Naive thymus-derived CD4-positive, alpha-beta T cell (primary cell): ENCODE measurements at regions of chr5 and their contacts with region 1.

Region 1: GRCh38 chr5:54243473-54244080 is 66.8 kb downstream of the ARL15 start:
- DNase-seq: peak in 6 of 9 donors; percentile 10 to 45 (median 36)
- ATAC-seq: peak; percentile 54
- H3K4me3 ChIP-seq: no peak overlapping the region
- H3K4me3 Mint-ChIP-seq: no peak overlapping the region
- H3K27ac ChIP-seq: no peak overlapping the region
- H3K27ac Mint-ChIP-seq: no peak overlapping the region
- H3K4me1 ChIP-seq: no peaks in the 10 kb centered on the region
- H3K4me1 Mint-ChIP-seq: peaks cover 0 to 22% (median 14%) of the 10 kb centered on the region in 7 donors
- H3K27me3 ChIP-seq: no peaks in the 10 kb centered on the region
- H3K27me3 Mint-ChIP-seq: peaks cover 0 to 10% (median 0%) of the 10 kb centered on the region in 5 donors

Region 2: GRCh38 chr5:54415896-54416601 is 172.5 kb after region 1 on chr5:
- CTCF ChIA-PET with region 1: interaction called, 23 read pairs
- POLR2A ChIA-PET with region 1: no interaction called
- intact Hi-C with region 1: loop called (anchors 1 kb)
- DNase-seq: no peak
- ATAC-seq: no peak
- H3K4me3 ChIP-seq: no peak overlapping the region
- H3K4me3 Mint-ChIP-seq: no peak overlapping the region
- H3K27ac ChIP-seq: no peak overlapping the region
- H3K27ac Mint-ChIP-seq: no peak overlapping the region
- H3K4me1 ChIP-seq: no peaks in the 10 kb centered on the region
- H3K4me1 Mint-ChIP-seq: peaks cover 0 to 1% (median 0%) of the 10 kb centered on the region in 7 donors
- H3K27me3 ChIP-seq: no peaks in the 10 kb centered on the region
- H3K27me3 Mint-ChIP-seq: peaks cover 4 to 32% (median 10%) of the 10 kb centered on the region in 5 donors

Region 3: DNA sequence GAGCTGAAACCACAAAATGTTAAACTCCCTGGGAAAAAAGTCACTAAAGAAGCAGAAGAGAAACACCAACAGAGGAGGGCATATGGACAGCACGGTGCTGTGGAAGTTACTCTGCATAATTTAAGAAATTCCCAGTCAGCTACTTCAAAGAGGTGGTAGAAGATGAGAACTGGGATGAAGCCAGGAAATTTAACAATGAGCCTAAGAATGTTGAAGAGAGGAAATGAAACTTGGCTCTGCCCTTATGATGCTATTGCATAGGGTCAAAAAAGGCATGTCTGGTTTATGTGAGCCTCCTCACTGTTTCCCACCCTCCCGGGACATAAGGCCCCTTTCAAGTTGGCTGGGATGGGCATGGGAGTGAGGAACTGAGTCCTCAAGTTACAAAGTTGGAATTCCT is 248.6 kb after region 1 on chr5:
- CTCF ChIA-PET with region 1: interaction called, 19 read pairs
- POLR2A ChIA-PET with region 1: no interaction called
- intact Hi-C with region 1: loop called (anchors 1 kb)
- DNase-seq: no peak
- ATAC-seq: no peak
- H3K4me3 ChIP-seq: no peak overlapping the region
- H3K4me3 Mint-ChIP-seq: no peak overlapping the region
- H3K27ac ChIP-seq: no peak overlapping the region
- H3K27ac Mint-ChIP-seq: no peak overlapping the region
- H3K4me1 ChIP-seq: no peaks in the 10 kb centered on the region
- H3K4me1 Mint-ChIP-seq: no peaks in the 10 kb centered on the region
- H3K27me3 ChIP-seq: no peaks in the 10 kb centered on the region
- H3K27me3 Mint-ChIP-seq: peaks cover 0 to 19% (median 4%) of the 10 kb centered on the region in 5 donors

Region 4: DNA sequence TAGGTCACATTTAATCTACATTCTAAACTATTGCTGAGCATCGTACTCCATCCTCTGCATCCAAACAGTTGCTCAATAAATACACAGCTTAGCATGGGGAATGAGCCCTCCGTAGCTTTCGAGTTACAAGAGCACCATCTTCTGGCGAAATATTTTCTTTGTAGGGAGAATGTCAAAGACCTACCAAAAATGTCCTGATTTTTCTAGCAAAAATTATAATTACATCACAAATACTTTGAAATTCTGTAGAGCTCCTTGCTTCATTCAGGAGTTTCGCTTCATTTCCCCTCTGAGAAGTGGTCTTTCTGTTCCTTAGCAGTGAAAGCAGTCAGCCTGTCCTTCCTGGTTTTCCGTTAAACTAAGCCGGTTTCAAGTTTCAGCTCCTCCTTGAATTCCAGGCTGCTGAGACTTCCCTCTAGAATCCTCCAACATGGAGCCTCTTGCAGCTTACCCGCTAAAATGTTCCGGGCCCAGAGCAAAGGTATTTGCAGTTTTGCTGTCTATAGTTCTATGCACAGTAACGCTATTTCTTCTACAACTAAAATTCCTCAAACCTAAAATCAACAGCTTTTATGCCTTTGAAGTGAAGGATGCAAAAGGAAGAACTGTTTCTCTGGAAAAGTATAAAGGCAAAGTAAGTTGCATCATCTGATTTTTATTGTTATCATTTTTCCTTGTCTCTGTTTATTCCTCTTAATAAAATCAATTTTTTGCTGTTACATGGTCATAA is 916.4 kb after region 1 on chr5 and contains the start of gene GPX8:
- CTCF ChIA-PET with region 1: no interaction called
- POLR2A ChIA-PET with region 1: no interaction called
- intact Hi-C with region 1: loop called in 1 of 2 experiments (anchors 1 kb)
- DNase-seq: peak in 7 of 9 donors; percentile 27 to 65 (median 54)
- ATAC-seq: peak; percentile 75
- H3K4me3 ChIP-seq: no peak within 1 kb of the TSS
- H3K4me3 Mint-ChIP-seq: no peak within 1 kb of the TSS
- H3K27ac ChIP-seq: no peak within 1 kb of the TSS
- H3K27ac Mint-ChIP-seq: no peak within 1 kb of the TSS
- H3K4me1 ChIP-seq: no peaks in the 10 kb centered on the region
- H3K4me1 Mint-ChIP-seq: peaks cover 0 to 9% (median 0%) of the 10 kb centered on the region in 7 donors
- H3K27me3 ChIP-seq: no peaks in the 10 kb centered on the region
- H3K27me3 Mint-ChIP-seq: peaks cover 6 to 75% (median 29%) of the 10 kb centered on the region in 5 donors
- total RNA-seq, gene GPX8: not detected